ENCODE measurements at regions of chr1 and their contacts with region 1.

Region 1: DNA sequence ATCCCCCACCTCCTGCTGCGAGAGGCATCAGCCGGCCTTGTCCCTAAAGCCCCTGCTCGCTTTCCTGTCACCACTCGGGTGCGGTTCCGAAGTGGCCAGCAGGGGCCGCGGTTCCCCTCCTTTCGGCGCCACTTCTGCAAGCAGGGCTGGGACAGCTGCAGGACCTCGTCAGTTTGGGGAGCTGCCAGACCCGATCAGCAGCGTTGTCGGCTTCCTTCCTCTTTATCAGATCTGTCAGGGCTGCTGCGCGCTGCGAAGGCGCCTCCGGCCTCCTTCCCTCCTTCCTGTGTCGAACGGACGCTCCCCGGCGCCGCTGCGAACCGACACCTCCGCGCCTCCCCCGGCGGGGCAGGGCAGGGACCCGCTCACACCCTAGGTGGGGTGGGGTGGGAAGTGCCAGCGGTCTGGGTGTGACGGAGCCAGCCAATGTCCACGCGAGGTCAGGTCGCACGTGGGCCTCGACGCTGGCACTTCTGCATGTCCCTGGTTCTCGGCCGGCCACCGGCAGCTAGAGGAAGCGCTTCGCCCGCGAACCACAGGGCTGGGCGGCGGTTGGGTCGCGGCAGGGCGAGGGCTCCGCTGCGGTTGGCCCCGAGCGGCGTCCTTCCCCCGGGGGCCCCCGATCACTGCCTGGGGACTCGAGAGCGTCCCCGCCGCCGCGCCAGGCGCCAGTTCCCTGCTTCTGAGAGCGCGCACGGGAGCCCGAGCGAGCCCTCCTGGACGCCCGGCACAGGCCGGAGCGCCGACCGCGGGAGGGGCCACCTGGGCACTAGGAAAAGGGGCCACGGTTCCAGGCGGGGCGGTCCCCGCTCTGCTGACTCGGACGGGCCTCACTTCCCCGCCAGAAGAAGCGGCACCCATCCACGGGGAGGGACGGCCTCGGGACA is 81.8 kb downstream of the RUNX3 start:
- DNase-seq: peak; percentile 95

Region 2: GRCh38 chr1:24688621-24689195 is 159.5 kb before region 1 on chr1:
- intact Hi-C with region 1: no loop called
- DNase-seq: peak; percentile 80

Region 3: DNA sequence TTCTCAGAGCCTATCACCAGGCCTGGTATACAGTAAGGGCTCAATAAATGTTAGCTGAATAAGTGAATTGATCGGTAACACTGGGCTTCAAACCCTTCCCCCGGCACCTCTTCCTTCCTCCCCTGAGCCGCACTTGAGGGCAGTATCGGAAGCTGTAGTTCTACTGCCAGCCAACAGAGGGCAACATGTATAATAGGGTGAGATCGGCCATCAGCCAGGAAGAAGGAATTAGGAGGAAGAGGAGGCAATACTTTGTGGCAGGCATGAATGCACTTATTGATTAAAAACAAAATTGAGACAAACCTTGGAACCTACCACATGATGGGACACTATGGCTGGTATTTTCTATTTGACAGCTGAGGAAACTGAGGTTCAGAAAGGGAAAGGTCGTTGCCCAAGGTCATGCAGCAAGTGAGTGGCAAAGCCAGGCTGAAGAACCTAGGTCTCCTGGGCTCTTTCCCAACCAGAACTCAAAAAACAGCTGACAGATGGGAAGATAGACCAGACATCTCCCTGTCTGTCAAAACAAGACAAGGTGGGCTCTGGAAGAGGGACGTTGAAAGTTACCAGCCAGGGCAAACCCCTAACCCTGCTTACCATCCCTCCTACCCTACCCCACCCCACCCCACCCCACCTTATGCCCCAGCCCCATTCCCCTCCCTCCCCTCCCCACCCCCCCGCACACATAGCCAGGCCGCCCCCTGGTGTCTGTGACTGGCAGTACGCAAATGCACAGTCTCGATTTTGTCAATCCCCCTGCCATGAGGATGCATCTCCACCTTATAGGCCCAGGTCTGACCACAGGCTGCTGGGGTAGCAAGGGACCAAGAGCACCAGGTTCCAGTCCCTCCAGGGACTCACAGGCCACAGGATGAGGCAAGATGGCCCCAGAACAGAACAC is 189.2 kb after region 1 on chr1:
- intact Hi-C with region 1: loop called (anchors 5 kb)
- DNase-seq: no peak

Region 4: DNA sequence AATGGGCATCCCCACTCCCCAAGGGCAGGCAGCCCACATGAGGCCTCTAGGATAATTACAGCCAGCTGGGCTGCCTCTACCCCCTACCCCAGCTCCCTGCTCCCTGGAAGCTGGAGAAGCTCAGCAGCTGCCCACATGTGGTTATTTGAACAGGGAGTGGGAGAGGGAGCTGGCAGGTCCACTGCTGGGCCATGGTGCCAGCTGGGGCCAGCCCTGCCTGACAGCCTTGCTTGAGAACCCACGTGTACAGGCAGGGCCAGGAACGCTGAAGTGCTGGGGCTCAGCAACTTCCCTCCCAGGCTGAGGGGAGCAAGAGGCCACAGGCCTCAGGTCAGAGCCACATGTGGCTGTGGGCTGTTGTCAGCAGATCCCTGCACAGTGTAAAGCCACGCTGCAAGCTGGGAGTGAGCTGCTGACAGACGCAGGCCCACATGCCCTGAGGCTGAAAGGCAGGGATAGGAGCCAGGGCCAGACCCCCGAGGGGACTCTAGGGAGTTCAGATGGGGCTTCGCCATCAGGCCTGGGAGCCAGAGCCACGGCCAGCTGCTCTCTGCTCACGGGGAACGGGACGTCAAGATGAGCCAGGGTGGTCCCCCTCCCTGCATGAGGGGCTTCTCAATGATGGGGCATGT is 255.0 kb after region 1 on chr1:
- intact Hi-C with region 1: loop called (anchors 5 kb)
- DNase-seq: no peak

Region 5: DNA sequence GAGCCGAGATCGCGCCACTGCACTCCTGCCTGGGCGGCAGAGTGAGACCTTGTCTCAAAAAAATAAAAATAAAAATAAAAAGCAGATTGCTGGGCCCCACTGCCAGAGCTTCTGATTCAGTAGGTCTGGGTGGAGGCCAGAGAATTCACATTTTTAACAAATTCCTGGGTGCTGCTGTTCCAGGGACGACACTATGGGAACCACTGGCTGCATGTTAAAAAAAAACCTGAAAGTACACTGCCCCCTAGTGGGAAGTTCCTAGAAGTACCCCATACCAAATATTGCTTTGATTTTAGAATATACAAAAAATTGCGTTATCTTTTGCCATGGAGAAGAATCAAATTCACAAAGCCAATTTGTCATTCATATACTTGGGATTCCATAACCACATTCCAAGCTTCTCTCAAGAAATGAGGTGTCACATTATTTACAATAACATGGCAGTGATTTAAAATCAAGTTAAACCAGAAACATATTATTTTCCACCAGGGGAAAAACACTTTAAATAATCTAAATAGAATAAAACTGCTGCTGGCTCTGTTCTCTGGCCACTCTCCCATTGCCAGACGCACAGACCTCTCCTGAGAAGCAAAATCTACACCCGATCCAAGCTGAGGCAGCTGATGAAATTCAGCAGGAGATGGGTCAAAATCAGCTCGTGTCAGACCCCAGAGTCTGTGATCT is 356.7 kb after region 1 on chr1:
- intact Hi-C with region 1: loop called (anchors 2 kb)
- DNase-seq: no peak

Measured in cardiac septum (tissue), 1 donor.